GM12878 (cell line): ENCODE measurements at regions of chr15 and their contacts with region 1.

Region 1: DNA sequence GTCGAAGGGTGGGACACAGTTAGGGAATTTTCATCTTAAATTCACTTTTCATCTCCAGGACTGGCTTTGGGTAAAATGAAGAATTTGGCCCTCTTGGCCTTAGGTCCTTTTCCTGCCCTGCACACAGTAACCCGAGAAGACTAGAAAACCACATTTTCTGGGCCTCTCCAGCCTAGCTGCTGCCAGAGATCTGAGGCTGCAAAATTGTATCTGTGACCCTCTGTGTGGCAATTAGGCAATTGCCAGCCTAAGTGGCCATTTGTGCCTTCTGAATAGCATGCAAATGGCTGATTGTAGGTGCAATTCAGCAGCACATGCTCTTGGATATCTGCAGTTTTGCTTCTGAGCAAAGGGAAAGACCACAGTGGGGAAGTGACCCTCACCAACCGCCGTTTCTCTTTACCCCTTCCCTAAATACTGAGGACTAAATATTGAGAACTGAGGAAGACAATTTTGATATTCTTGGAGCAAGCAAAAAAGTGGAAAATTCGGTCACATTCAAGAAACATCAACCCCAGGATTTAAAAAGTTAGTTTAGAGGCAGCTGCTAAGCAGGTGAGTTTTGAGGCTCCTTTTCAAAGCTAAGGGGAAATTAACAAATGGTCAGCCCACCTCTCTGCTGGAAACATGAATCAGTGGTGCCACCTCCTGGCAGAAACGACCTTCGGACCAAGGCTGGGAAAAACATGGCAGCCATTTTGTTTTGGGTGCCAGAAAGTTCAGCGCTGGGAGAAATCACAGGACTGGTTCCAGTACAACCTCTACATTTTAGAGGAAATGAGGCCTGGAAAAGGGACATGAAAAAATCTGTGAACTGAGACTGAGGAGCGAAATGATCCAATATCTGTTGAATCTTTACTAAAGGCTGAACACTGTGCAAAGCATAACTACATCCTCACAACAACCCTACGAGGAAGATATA is 56.6 kb upstream of the PRTG start:
- DNase-seq: peak; percentile 4
- ATAC-seq: peak; percentile 81
- H3K4me3 ChIP-seq: no peak overlapping the region
- H3K27ac ChIP-seq: no peak overlapping the region
- H3K4me1 ChIP-seq: no peaks in the 10 kb centered on the region
- H3K27me3 ChIP-seq: no peaks in the 10 kb centered on the region
- CTCF ChIP-seq: peak; percentile 50 to 69 (median 63)
- EP300 ChIP-seq: no peak
- POLR2A ChIP-seq: no peak
- RAD21 ChIP-seq: peak; percentile 77

Region 2: DNA sequence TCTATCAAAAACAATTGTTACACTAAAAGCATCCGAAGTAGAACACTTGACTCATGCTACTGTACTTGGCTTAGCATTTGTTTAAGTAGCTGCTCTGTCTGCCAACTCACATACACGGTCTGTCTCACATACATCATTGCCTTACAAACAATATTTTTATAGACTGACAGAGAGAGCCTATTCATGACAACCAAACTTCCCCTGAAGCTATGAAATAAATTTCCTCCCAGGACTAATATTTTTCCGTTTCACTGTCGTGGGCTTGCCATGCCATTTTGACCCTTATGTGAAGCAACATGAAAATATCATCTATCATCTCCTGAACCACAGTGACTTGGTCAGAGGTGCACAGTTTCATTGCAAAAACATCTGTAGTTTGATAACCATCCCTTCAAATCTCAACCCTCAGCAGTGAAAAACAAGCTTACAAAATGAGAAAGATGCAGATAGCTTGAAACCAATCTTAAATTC is 145.0 kb before region 1 on chr15:
- CTCF ChIA-PET with region 1: interaction called, 33 read pairs
- POLR2A ChIA-PET with region 1: no interaction called
- RAD21 ChIA-PET with region 1: no interaction called
- SMC1A ChIA-PET with region 1: interaction called, 3 read pairs
- in situ Hi-C with region 1: loop called (anchors 5 kb)
- intact Hi-C with region 1: no loop called
- DNase-seq: no peak
- ATAC-seq: no peak
- H3K4me3 ChIP-seq: no peak overlapping the region
- H3K27ac ChIP-seq: no peak overlapping the region
- H3K4me1 ChIP-seq: no peaks in the 10 kb centered on the region
- H3K27me3 ChIP-seq: no peaks in the 10 kb centered on the region
- CTCF ChIP-seq: no peak
- EP300 ChIP-seq: no peak
- POLR2A ChIP-seq: no peak
- RAD21 ChIP-seq: no peak